Panc1 (cell line): ENCODE measurements at regions of chr1 and their contacts with region 1.

Region 1: GRCh38 chr1:152001391-152002249 is 8.0 kb upstream of the S100A10 start:
- DNase-seq: no peak
- ATAC-seq: peak; percentile 77
- H3K4me3 ChIP-seq: no peak overlapping the region
- H3K27ac ChIP-seq: peak overlapping the region; percentile 89
- H3K4me1 ChIP-seq: peaks cover 42% of the 10 kb centered on the region
- H3K27me3 ChIP-seq: no peaks in the 10 kb centered on the region
- CTCF ChIP-seq: peak; percentile 94

Region 2: DNA sequence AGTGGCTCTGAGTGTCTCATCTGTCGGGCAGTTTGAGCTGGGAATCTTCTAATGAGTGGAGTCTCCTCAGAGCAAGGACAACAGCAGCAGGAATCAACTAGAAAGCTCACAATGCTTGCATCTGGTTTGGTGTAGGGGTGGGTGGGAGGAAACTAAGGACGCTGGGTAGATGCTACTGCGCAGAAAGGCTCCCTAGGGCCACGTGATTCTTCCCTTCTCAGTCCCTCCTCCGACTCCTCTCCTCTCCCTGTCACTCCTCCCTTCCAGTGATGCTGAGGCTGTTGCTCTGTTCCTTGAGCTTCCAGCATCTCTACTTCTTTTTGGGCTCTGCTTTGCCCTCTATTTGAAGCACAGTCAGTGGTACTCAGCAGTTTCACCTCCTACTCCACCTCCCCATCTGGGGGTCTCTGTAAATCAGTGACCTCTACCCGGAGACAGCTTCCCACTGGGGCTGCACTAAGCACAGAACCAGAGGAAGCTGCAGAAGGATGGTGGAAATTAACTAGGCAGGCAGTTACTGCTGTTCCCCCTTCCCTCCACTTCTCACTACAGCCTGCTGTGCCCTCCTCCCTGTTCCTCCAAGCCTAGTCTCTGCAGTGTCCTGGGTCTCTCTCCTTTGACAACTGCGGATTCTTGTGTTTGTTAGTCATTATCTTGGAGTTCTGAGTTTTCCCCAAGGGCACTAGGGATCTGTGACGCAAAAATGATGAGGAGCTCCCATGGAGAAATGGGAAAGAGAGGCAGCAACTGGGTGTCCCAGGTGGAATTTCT is 202.3 kb before region 1 on chr1:
- CTCF ChIA-PET with region 1: no interaction called
- POLR2A ChIA-PET with region 1: no interaction called
- in situ Hi-C with region 1: no loop called
- intact Hi-C with region 1: no loop called
- DNase-seq: no peak
- ATAC-seq: peak; percentile 47; the same call in 1 of the 2 replicates
- H3K4me3 ChIP-seq: no peak overlapping the region
- H3K27ac ChIP-seq: no peak overlapping the region
- H3K4me1 ChIP-seq: no peaks in the 10 kb centered on the region
- H3K27me3 ChIP-seq: no peaks in the 10 kb centered on the region
- CTCF ChIP-seq: no peak

Region 3: DNA sequence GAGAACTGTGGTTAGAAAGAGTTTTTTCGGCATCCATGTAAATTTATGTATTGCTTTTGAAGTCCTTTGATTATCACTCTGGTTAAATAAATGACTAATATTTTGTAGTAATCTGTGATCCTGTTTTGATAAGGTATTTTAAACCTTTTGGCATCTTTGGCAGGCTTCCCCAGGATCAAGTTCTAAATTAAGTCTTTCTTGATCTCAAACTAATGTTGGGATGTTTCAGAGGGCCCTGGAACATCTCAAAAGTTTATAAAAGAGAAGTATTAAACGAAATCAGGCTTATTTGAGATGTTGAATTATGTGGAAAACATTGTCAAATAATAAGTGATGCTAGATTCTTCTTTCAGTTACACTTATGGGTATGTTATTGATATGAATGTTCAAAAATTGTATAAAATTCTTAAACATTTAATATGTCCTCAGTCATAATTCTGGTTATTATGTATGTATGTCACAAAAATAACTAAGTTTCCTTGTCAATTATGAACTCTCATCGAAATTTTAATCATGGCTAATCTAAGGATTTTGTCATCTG is 44.6 kb before region 1 on chr1:
- CTCF ChIA-PET with region 1: no interaction called
- POLR2A ChIA-PET with region 1: no interaction called
- in situ Hi-C with region 1: no loop called
- intact Hi-C with region 1: no loop called
- DNase-seq: no peak
- ATAC-seq: no peak
- H3K4me3 ChIP-seq: no peak overlapping the region
- H3K27ac ChIP-seq: peak overlapping the region; percentile 35; the same call in 1 of the 2 replicates
- H3K4me1 ChIP-seq: no peaks in the 10 kb centered on the region; the same call in 1 of the 2 replicates
- H3K27me3 ChIP-seq: no peaks in the 10 kb centered on the region
- CTCF ChIP-seq: no peak

Region 4: DNA sequence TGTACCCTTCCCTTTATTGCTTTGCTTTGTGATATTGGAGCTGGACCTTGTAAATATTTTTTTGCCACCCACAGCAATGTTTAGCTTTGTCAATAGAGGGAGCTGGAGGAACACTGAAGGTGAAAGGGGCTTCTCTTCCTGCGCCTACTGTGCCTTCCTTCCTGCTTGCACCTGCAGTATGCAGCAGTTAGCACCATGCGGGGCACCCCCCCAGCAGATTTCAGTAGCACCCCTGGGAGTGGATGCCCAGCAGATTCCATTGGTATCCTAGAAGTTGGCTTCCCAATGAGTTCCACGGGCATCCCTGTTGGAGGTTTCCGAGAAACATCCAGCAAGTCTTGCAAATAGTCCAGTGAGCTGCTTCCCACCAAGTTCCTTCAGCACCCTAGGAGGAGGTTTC is 33.6 kb before region 1 on chr1:
- CTCF ChIA-PET with region 1: interaction called, 27 read pairs
- POLR2A ChIA-PET with region 1: interaction called, 25 read pairs
- in situ Hi-C with region 1: no loop called
- intact Hi-C with region 1: loop called (anchors 1 kb)
- DNase-seq: no peak
- ATAC-seq: peak; percentile 71
- H3K4me3 ChIP-seq: no peak overlapping the region
- H3K27ac ChIP-seq: peak overlapping the region; percentile 93
- H3K4me1 ChIP-seq: peaks cover 61% of the 10 kb centered on the region
- H3K27me3 ChIP-seq: no peaks in the 10 kb centered on the region
- CTCF ChIP-seq: peak; percentile 86

Region 5: DNA sequence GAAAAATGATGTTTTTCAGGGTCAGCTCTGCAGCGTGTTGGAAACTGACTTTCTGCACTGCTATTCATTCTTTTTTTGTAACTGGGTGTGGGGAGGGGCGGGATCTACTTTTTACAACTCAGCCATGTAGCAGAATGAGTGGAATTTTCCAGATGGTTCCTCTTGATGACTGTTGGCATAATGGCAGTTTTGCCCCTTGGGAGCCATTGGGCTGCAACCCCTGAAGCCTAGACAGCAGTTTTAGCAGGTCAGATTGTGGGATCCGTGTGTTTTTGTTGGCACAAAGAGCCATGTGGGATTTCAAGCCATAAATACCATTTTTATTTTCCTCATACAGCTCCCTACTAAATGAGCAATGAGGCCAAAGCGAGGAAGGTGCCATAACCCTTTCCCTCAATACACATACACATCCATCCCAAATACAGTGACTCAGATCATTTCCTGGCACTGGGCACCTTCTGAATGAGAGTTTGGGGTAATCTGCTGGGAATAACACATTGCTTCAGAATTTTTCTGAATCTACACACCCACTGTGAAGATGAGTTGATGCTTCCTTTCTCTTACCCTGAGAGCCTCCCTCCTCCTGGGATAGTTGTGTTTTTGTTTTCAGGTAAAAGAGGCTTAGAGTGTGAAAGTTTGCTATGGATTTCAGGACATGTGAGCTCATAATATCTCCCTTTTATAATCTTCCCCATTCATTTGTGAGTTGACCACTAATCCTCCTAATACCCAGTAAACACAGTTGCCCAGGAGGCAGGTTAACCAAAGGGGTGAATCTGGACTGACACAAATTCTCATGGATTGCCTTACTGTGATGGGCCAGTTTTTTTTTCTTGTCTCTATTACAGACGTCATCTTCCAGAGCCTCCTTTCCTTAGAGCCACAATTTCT is 21.1 kb before region 1 on chr1:
- CTCF ChIA-PET with region 1: interaction called, 4 read pairs
- POLR2A ChIA-PET with region 1: interaction called, 11 read pairs
- in situ Hi-C with region 1: no loop called
- intact Hi-C with region 1: no loop called
- DNase-seq: no peak
- ATAC-seq: peak; percentile 73
- H3K4me3 ChIP-seq: peak overlapping the region in 1 of 2 experiments; percentile 19; a peak in 1 of 4 replicates
- H3K27ac ChIP-seq: peak overlapping the region; percentile 99
- H3K4me1 ChIP-seq: peaks cover 97% of the 10 kb centered on the region
- H3K27me3 ChIP-seq: no peaks in the 10 kb centered on the region
- CTCF ChIP-seq: no peak

Region 6: DNA sequence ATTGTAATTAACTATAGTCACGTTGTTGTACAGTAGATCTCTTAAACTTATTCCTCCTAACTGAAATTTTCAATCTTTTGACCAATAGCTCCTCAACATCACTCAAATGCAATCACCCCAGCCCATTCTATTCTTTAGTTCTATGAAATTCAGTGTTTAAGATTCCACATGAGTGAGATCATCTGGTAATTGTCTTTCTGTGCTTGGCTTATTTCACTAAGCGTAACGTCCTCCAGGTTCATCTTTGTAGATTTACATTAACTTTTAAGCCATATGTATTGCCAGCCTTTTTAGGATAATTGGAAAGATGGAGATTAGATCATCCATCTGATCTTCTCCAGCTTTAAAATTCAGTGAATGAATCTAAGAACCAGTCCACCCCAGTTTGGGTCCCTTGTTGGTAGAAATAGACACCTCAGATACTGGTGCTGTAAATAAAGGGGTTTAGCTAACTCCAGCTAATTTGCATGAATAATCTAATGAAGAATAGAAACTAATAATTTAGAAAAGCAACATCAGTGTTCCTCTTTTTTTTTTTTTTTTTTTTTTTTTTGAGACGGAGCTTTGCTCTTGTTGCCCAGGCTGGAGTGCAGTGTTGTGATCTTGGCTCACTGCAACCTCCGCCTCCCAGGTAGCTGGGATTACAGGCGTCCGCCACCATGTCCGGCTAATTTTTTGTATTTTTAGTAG is 15.0 kb before region 1 on chr1:
- CTCF ChIA-PET with region 1: interaction called, 4 read pairs
- POLR2A ChIA-PET with region 1: interaction called, 17 read pairs
- in situ Hi-C with region 1: no loop called
- intact Hi-C with region 1: no loop called
- DNase-seq: no peak
- ATAC-seq: no peak
- H3K4me3 ChIP-seq: no peak overlapping the region
- H3K27ac ChIP-seq: peak overlapping the region; percentile 99
- H3K4me1 ChIP-seq: peaks cover 92% of the 10 kb centered on the region
- H3K27me3 ChIP-seq: no peaks in the 10 kb centered on the region
- CTCF ChIP-seq: no peak